Activated CD4-positive, alpha-beta T cell treated with anti-CD3 and anti-CD28 coated beads, Interleukin-2, amount 10 ng/mL, durations not matched to agents 24 days and 14 days (primary cell): ENCODE measurements at regions of chr12 and their contacts with region 1.

Region 1: DNA sequence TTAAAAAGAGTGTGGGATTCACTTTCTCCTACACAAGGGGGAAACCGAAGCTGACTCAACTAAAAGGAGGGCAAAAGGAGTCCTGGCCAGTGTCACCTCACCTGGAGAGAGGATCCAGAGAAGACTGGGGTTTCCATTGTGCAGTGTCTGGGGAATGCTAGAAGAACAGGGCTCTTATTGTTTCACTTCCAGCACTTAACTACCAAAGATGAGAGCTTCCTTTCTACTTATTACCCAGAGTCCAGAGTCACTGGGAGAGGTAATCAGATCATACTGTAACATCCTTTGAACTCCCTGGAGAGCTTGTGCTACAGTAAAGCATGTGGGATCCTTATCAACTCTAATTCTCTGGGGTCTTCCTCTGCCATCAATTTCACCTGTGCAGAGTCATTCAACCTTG is 148.4 kb upstream of the BCL2L14 start:
- DNase-seq: peak; percentile 52
- H3K4me3 Mint-ChIP-seq: no peak overlapping the region
- H3K27ac Mint-ChIP-seq: peak overlapping the region; percentile 34
- H3K4me1 Mint-ChIP-seq: peaks cover 22% of the 10 kb centered on the region
- H3K27me3 Mint-ChIP-seq: no peaks in the 10 kb centered on the region

Region 2: GRCh38 chr12:11869941-11870540 is 52.3 kb before region 1 on chr12:
- intact Hi-C with region 1: no loop called
- DNase-seq: no peak
- H3K4me3 Mint-ChIP-seq: no peak overlapping the region
- H3K27ac Mint-ChIP-seq: no peak overlapping the region
- H3K4me1 Mint-ChIP-seq: peaks cover 26% of the 10 kb centered on the region
- H3K27me3 Mint-ChIP-seq: no peaks in the 10 kb centered on the region

Region 3: GRCh38 chr12:11901701-11902524 is 20.4 kb before region 1 on chr12:
- intact Hi-C with region 1: no loop called
- DNase-seq: peak; percentile 72
- H3K4me3 Mint-ChIP-seq: peak overlapping the region; percentile 58
- H3K27ac Mint-ChIP-seq: peak overlapping the region; percentile 97
- H3K4me1 Mint-ChIP-seq: peaks cover 62% of the 10 kb centered on the region
- H3K27me3 Mint-ChIP-seq: no peaks in the 10 kb centered on the region

Region 4: DNA sequence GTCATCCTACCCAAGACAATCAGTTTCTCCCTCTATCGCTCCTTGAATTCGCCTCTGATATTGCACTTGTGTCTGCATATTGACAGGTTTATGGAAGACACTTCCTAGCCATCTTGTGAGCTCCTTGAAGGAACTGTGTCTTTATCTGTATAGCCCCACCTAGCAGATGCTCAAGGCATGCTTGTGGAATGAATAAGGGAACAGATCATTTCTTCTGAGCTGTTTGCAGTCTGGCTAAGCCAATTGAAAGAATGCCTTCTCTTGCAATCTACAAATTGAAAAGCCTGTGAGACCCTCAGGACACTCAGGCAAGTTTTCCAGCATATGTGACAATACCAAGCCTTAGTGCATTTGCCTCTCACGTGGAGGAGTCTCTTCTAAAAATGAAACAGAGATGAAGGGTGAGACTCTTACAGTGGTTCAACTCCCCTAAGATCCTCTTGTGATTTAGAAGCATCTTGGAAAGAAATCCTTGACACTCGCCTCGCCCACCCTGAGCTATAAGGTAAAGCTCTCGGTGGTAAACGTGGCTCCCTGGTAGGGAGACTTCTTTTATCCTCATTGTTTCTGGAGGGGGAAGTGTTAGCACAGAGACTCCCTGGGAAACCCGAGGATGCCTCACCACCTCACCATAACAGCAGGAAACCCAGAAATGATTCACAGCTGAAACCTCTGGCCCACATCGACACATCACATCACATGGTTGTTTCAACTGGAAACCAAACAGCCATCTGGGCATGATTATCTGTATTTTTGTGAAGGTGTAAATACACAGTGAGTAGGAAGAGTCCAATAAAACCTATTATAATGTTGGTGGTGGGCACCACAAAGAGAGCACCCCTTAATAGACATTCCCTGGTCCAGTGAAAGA is 36.1 kb after region 1 on chr12:
- intact Hi-C with region 1: loop called (anchors 5 kb)
- DNase-seq: peak; percentile 85
- H3K4me3 Mint-ChIP-seq: peak overlapping the region; percentile 27
- H3K27ac Mint-ChIP-seq: peak overlapping the region; percentile 91
- H3K4me1 Mint-ChIP-seq: peaks cover 57% of the 10 kb centered on the region
- H3K27me3 Mint-ChIP-seq: no peaks in the 10 kb centered on the region